ENCODE measurements at regions of chr6 and their contacts with region 1.

Region 1: DNA sequence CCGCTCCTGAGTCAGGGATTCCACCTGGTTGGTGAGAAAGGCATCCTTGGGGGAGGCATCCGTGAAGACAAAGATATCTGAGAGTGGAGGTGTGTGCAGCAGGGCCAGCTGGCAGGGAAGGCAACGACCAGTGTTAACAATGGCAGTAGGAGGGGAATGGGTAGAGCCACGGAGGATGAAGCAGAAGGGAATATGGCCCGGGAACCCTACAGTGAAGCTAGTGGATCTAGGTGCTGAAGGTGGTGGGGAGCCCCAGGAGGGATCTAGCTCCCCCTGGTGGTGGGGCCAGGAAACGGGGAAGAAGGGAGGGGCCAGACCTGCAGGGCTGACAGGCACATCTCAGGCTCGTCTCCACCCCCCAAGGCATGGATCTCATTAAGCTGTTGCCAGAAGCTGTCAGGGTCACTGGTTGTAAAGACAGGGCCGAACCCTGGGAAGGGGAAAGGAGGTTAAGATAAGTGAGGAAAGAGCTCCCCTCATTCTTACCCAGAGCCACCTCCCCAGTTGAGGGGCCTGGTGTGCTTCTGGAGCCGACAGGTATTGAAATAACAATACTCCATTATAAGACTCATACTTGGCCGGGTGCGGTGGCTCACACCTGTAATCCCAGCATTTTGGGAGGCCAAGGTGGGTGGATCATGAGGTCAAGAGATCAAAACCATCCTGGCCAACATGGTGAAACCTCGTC is 7.3 kb downstream of the VWA7 start:
- DNase-seq: peak; percentile 93
- H3K4me3 ChIP-seq: no peak overlapping the region
- H3K27ac ChIP-seq: peak overlapping the region; percentile 77
- H3K4me1 ChIP-seq: no peaks in the 10 kb centered on the region
- H3K27me3 ChIP-seq: no peaks in the 10 kb centered on the region
- CTCF ChIP-seq: peak; percentile 93

Region 2: DNA sequence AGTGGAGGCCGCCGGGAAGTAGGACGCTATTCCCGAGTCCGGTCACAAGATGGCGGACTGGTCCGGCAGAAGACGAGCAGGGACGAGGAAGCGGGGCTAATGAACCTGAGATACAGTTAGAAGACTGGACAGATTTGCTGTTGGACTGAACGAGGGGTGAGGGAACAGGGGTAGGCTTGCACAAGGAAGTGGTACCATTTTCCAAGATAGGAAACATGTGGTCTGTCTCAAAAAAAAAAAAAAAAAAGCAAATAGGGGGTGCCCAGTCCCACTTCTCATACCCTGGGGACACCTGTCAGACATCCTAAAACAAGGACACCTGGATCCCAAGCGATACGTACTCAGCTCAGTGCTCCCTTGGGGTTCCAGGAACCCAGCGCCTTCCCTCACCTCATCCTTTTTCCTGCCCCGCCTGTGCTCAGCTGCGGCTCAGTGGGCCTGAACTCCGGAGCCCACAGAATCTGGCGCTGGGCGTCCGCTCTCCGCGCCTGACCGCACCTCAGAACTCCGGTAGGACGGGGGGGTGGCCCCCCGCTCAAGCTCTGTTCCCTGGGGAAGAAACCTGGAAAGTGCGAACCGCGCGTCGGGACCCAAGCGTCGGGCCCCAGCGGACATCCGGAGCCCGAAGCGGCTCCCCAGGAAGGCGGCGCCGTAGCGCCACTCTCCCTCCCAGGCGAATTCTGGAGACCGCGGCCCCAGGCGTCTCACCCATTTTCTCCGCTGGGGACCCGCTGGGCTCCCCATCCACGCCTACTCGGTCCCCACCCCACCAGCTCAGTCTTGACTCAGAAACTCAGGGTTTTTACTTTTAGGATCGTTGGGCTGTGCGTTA is 88.8 kb before region 1 on chr6 and contains the start of gene LY6G5C:
- intact Hi-C with region 1: loop called (anchors 5 kb)
- DNase-seq: peak; percentile 86
- H3K4me3 ChIP-seq: peak within 1 kb of the TSS; percentile 41
- H3K27ac ChIP-seq: peak within 1 kb of the TSS; percentile 30
- H3K4me1 ChIP-seq: peaks cover 9% of the 10 kb centered on the region
- H3K27me3 ChIP-seq: no peaks in the 10 kb centered on the region
- CTCF ChIP-seq: peak; percentile 66
- total RNA-seq, gene LY6G5C: 1.9 to 2.8 TPM

Region 3: GRCh38 chr6:31834434-31835198 is 64.8 kb after region 1 on chr6:
- intact Hi-C with region 1: loop called (anchors 5 kb)
- DNase-seq: peak; percentile 92
- H3K4me3 ChIP-seq: peak overlapping the region; percentile 85
- H3K27ac ChIP-seq: peak overlapping the region; percentile 91
- H3K4me1 ChIP-seq: peaks cover 23% of the 10 kb centered on the region
- H3K27me3 ChIP-seq: no peaks in the 10 kb centered on the region
- CTCF ChIP-seq: no peak

Region 4: DNA sequence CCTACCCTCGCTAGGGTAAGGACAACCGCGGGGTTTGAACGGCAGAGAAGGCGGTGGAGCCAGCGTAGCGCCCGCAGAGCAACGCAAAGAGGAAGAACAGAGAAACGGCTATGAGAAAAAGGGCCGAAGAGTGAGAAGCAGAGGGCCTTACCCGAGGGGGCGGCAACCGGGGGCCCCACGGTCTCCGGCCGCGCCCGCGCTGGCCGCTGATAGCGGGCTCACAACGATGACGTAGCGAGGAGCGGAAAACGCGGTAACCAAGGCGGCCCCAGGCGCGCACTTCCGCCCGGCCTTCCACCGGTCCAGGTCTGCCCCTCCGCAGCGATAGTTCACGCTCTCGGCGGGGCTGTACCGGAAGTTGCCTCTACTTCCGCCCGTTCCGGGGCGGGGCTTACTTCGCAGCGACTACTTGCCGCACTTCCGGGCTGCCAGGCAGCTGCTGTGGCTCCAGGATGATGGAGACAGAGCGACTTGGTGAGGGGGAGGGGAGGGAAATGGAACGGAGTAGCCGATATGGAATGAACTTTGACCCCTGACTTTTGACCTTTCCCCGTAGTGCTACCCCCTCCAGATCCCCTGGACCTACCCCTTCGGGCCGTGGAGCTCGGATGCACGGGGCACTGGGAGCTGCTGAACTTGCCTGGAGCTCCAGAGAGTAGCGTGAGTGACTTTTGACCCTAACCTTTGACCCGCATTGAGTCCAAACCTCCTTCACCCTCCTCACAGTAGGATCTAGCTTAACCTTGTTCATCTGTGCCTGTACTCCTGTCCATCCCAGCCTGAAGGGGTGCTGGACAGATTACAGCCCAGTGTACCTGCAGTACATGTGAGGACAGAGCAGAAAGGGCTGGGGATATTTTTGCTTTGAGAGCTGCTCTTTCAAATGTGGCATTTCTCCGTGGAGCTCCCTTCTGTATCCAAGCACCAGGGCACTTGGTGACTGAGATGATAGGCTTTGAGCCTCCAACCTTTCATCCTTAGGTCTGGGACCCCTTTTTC is 189.2 kb after region 1 on chr6 and contains the starts of genes NELFE and SKIC2:
- intact Hi-C with region 1: loop called (anchors 10 kb)
- DNase-seq: peak; percentile 99
- H3K4me3 ChIP-seq: peak within 1 kb of the TSS; percentile 58
- H3K27ac ChIP-seq: peak within 1 kb of the TSS; percentile 32
- H3K4me1 ChIP-seq: peaks cover 6% of the 10 kb centered on the region
- H3K27me3 ChIP-seq: no peaks in the 10 kb centered on the region
- CTCF ChIP-seq: no peak
- total RNA-seq, gene NELFE: 50.3 to 55.6 TPM
- total RNA-seq, gene SKIC2: 52.5 to 81.1 TPM

Region 5: GRCh38 chr6:32058511-32058963 is 288.7 kb after region 1 on chr6:
- intact Hi-C with region 1: no loop called
- DNase-seq: no peak
- H3K4me3 ChIP-seq: no peak overlapping the region
- H3K27ac ChIP-seq: no peak overlapping the region
- H3K4me1 ChIP-seq: no peaks in the 10 kb centered on the region
- H3K27me3 ChIP-seq: no peaks in the 10 kb centered on the region
- CTCF ChIP-seq: no peak

Measured in colonic mucosa (tissue), 4 donors.